ENCODE measurements at regions of chr10 and their contacts with region 1.

Region 1: GRCh38 chr10:114470956-114471905 is 66.9 kb upstream of the AFAP1L2 start:
- DNase-seq: peak; percentile 58 to 73
- ATAC-seq: peak; percentile 94 to 96
- H3K4me3 ChIP-seq: no peak overlapping the region
- H3K27ac ChIP-seq: no peak overlapping the region
- H3K4me1 ChIP-seq: no peaks in the 10 kb centered on the region
- CTCF ChIP-seq: peak; percentile 91
- EP300 ChIP-seq: no peak
- POLR2A ChIP-seq: no peak
- RAD21 ChIP-seq: peak; percentile 93 to 94

Region 2: GRCh38 chr10:114448897-114449296 is 22.3 kb before region 1 on chr10:
- CTCF ChIA-PET with region 1: interaction called, 12 read pairs
- POLR2A ChIA-PET with region 1: no interaction called
- DNase-seq: no peak
- ATAC-seq: no peak
- H3K4me3 ChIP-seq: no peak overlapping the region
- H3K27ac ChIP-seq: no peak overlapping the region
- H3K4me1 ChIP-seq: no peaks in the 10 kb centered on the region
- CTCF ChIP-seq: no peak
- EP300 ChIP-seq: no peak
- POLR2A ChIP-seq: no peak
- RAD21 ChIP-seq: no peak

Region 3: DNA sequence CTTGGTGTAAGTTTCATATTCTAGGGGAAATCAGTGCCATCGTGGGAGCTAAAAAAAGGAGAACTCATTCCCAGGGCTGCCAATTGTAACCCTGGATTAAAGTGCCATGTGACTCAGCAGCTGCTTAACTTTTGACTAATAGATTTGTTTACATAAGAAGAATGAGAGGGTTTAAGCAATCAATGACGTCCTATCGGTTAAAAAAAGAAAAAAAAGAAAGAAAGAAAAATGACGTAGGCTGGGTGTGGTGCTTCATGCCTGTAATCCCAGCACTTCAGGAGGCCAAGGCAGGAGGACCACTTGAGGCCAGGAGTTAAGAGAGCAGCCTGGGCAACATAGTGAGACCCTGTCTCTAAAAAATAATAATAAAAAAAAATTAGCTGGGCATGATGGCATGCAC is 49.2 kb after region 1 on chr10:
- CTCF ChIA-PET with region 1: interaction called, 33 read pairs
- POLR2A ChIA-PET with region 1: no interaction called
- DNase-seq: peak; percentile 81 to 90
- ATAC-seq: peak; percentile 45 to 50; a peak in 5 of 6 replicates
- H3K4me3 ChIP-seq: no peak overlapping the region
- H3K27ac ChIP-seq: peak overlapping the region; percentile 75 to 83
- H3K4me1 ChIP-seq: peaks cover 68% of the 10 kb centered on the region
- CTCF ChIP-seq: no peak
- EP300 ChIP-seq: peak; percentile 41 to 49; a peak in 3 of 5 replicates
- POLR2A ChIP-seq: no peak
- RAD21 ChIP-seq: no peak

Region 4: DNA sequence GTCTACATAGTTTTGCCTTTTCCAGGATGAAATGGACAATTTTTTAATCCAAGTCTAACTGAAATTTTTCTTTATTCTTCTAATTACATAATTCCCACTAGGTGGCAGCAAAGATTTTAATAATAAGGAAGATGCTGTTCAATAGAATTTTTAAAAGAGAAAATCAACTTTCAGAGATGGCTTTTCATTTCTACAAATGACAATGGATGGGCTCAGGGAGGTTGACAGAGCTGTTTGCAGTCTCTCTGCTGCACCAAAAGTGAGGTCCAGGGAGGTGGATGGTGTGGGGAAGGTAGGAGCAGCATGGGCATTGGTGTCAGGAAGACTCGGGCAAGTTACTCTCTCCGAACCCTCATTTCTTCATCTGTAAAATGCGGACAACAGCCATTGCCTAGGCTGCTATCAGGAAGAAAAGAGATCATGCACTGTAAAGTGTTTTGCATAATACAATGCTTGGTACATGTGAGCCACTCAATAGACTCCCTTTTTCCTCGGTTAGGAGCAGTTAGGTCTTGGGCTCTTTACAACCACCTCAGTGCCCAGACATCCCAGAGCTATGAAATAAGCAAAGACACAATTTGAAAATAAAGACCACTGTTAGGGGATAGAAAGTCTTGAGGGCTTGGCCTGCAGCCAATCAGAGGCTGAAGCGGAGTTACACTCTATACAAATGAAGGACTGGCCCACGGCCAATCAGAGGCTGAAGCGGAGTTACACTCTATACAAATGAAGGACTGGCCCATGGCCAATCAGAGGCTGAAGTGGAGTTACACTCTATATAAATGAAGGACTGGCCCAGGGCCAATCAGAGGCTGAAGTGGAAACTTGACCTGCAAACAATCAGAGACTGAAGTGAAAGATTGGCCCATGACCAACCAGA is 79.8 kb after region 1 on chr10:
- CTCF ChIA-PET with region 1: interaction called, 122 read pairs
- POLR2A ChIA-PET with region 1: no interaction called
- DNase-seq: peak; percentile 9 to 17
- ATAC-seq: peak in 1 of 2 experiments; percentile 30; a peak in 2 of 6 replicates
- H3K4me3 ChIP-seq: no peak overlapping the region
- H3K27ac ChIP-seq: no peak overlapping the region
- H3K4me1 ChIP-seq: no peaks in the 10 kb centered on the region
- CTCF ChIP-seq: peak; percentile 79
- EP300 ChIP-seq: no peak
- POLR2A ChIP-seq: no peak
- RAD21 ChIP-seq: peak; percentile 78 to 93

Region 5: DNA sequence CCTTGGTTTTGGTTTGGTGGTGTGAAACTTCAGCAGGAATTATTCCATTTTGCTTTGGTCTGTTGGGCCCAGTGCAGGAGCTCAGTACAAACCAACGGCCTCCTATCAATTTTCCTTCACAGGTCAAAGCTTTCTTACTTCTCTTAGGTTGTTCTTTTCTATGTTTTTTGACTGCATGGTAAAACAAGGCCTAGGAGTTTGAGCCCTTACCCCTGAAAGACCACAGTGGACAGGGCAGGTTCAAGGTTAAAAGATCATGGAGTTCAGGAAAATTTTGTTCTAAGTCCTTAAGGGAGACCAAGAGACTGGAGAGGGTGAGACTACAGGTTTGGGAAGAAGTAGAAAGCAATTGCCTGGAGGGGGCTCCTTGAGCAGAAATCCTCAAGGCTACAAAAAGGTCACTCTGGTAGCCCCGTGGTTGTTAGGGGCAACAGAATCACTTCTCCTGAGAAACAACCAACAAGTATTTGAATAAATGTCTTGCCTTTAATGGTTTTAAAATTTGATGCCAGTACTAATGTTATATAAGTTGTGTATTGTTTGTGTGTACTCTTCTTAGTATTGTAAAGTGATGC is 309.5 kb after region 1 on chr10:
- CTCF ChIA-PET with region 1: interaction called, 26 read pairs
- POLR2A ChIA-PET with region 1: no interaction called
- DNase-seq: no peak
- ATAC-seq: peak; percentile 9 to 38; a peak in 3 of 6 replicates
- H3K4me3 ChIP-seq: no peak overlapping the region
- H3K27ac ChIP-seq: peak overlapping the region; percentile 68 to 79
- H3K4me1 ChIP-seq: peaks cover 37% of the 10 kb centered on the region
- CTCF ChIP-seq: no peak
- EP300 ChIP-seq: no peak
- POLR2A ChIP-seq: no peak
- RAD21 ChIP-seq: no peak